ENCODE measurements at regions of chr1 and their contacts with region 1.

Region 1: DNA sequence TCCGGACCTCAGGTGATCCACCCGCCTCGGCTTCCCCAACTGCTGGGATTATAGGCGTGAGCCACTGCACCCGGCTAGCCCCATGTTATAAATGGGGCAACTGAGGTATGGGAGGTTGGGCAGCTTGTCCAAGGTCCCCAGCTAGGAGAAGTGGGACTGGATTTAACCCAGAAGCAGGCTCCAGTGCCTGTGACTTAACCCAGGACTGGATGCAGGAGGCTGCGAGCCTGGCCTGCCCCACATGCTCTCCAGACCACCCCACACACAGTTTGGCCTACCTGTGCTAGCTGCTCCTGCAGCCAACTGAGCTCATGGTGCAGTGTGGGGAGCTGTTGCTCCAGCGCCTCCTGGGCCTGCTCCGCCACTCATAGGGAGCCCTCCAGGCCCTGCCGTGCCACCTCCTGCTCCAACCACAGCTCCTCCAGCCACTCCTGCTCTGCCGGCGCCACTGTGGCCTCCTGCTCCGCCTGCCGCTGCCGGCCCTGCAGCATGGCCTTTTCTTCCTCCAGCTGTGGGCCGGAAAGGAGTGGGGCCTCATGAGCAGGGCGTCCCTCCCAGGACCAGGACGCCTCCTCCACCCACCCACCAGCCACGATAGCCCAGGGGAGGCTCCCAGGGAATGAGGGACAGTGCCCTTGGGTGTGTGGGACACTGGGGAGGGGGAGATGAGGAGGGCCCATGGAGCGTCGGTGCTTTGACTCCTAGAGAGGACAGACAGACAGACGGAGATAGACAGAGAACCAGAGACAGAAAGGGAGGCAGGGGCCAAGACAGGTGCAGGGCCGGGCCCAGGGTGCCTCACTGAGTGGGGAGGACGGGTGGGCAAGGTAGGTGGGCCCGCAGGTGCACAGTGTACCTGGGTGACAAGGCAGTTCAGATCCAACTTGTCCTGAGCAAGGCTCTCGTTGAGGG is 12.4 kb upstream of the NBPF1 start:
- DNase-seq: peak; percentile 5
- H3K4me3 Mint-ChIP-seq: no peak overlapping the region
- H3K27ac Mint-ChIP-seq: no peak overlapping the region
- H3K4me1 Mint-ChIP-seq: no peaks in the 10 kb centered on the region
- H3K27me3 Mint-ChIP-seq: no peaks in the 10 kb centered on the region

Region 2: DNA sequence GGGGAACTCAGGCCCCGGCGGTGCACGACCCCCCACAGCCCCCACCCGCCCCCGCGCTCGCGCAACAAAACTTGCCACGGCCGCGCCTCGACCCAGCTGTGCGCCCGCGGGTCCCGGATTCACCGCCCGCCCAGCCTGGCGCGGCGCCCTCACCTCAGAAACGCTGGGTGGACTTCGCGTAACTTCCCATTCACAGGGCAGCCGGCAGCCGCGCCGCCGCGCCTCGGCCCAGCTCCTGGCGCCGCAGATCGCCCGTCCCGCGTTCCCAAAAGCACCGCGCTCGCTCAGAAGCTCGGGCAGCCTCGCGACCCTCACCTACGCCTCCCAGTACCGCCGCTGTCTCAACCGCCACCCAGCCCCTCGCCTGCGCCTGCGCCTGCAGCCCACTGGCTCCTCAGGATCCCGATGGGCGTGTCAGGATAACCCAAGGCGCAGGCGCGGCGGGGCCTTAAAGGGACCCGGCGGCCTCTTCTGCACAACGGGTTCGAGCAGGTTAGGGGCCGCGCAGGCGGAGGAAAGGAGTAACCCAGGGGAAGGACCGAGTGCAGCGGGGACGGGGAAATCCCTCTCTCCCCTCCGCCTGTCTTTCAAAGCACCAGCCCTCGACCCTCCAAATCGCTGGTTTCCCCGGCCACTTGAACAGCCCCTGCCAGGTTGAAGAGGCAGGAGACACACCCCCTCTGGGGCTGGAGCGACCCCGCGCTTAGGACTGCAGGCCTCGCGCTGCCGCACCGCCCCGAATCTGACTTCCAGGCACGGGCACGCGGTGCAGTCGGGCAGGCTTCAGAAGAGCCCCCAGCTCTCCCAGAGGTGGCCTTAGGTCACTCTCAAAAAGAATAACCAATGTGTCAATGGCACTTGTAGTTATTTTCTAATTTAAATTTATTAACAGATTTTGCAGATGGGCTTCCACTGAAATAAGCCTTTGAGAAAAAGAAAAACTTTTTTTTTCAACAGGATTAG is 12.3 kb before region 1 on chr1 and contains the start of gene NBPF1:
- CTCF ChIA-PET with region 1: interaction called, 26 read pairs
- intact Hi-C with region 1: no loop called
- DNase-seq: peak; percentile 92
- H3K4me3 Mint-ChIP-seq: no peak within 1 kb of the TSS
- H3K27ac Mint-ChIP-seq: no peak within 1 kb of the TSS
- H3K4me1 Mint-ChIP-seq: no peaks in the 10 kb centered on the region
- H3K27me3 Mint-ChIP-seq: no peaks in the 10 kb centered on the region
- total RNA-seq, gene NBPF1: 1.6 to 1.9 TPM

Region 3: GRCh38 chr1:16717336-16718098 is 91.8 kb after region 1 on chr1:
- CTCF ChIA-PET with region 1: no interaction called
- intact Hi-C with region 1: no loop called
- DNase-seq: no peak
- H3K4me3 Mint-ChIP-seq: no peak overlapping the region
- H3K27ac Mint-ChIP-seq: no peak overlapping the region
- H3K4me1 Mint-ChIP-seq: no peaks in the 10 kb centered on the region
- H3K27me3 Mint-ChIP-seq: peaks cover 4% of the 10 kb centered on the region

Region 4: DNA sequence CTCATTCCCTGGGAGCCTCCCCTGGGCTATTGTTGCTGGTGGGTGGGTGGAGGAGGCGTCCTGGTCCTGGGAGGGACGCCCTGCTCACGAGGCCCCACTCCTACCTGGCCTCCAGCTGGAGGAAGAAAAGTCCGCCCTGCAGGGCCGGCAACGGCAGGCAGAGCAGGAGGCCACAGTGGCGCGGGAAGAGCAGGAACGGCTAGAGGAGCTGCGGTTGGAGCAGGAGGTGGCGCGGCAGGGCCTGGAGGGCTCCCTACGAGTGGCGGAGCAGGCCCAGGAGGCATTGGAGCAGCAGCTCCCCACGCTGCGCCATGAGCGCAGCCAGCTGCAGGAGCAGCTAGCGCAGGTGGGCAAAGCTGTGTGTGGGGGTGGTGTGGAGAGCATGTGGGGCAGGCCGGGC is 320.9 kb after region 1 on chr1:
- CTCF ChIA-PET with region 1: interaction called, 11 read pairs
- intact Hi-C with region 1: loop called (anchors 1 kb)
- DNase-seq: no peak
- H3K4me3 Mint-ChIP-seq: no peak overlapping the region
- H3K27ac Mint-ChIP-seq: no peak overlapping the region
- H3K4me1 Mint-ChIP-seq: no peaks in the 10 kb centered on the region
- H3K27me3 Mint-ChIP-seq: no peaks in the 10 kb centered on the region

Region 5: GRCh38 chr1:17011439-17012307 is 385.9 kb after region 1 on chr1 and contains the start of gene ATP13A2:
- CTCF ChIA-PET with region 1: no interaction called
- intact Hi-C with region 1: no loop called
- DNase-seq: peak; percentile 77
- H3K4me3 Mint-ChIP-seq: peak within 1 kb of the TSS; percentile 81
- H3K27ac Mint-ChIP-seq: no peak within 1 kb of the TSS
- H3K4me1 Mint-ChIP-seq: peaks cover 17% of the 10 kb centered on the region
- H3K27me3 Mint-ChIP-seq: no peaks in the 10 kb centered on the region
- total RNA-seq, gene ATP13A2: 23.6 to 25.0 TPM